ENCODE measurements at regions of chrX and their contacts with region 1.

Region 1: GRCh38 chrX:120485315-120485637 is 16.2 kb upstream of the LAMP2 start:
- DNase-seq: no peak
- ATAC-seq: no peak
- H3K4me3 ChIP-seq: peak overlapping the region; percentile 46 to 60
- H3K27ac ChIP-seq: peak overlapping the region; percentile 91
- H3K4me1 ChIP-seq: peaks cover 5% of the 10 kb centered on the region; the same call in 1 of the 2 replicates
- H3K27me3 ChIP-seq: no peaks in the 10 kb centered on the region
- CTCF ChIP-seq: no peak

Region 2: DNA sequence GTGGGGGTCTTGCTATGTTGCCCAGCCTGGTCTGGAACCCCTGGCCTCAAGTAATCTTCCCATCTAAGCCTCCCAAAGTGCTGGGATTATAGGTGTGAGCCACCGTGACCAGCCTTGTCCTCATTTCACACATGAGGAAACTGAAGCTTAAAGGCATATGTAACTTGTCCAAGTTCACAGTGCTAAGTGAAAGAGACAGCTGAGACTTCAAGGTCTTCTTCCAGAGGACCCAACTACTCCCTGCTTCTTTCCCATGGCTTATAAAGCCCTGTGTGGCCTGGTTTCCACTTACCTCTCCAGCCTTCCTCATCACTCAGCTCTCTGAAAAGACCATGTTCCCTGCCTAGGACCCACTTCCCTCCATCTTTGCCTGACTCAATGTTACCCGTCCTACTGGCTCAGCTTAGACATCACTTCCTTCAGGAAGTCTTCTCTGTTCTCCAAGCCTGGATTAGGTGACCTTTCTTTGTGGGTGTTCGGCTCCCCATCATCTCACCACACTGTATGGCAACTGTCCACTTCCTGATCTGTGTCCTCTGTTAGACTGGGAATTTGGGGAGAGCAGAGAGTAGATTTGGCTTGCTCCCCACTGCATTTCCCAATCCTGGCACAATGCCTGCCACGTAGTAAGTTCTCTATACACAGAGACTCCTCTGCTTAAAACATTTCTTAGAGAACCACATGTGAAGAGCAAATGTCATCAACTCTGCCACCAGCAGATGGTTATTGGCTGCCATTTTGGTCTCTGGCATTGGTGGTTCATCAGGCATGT is 14.2 kb after region 1 on chrX:
- CTCF ChIA-PET with region 1: no interaction called
- POLR2A ChIA-PET with region 1: no interaction called
- in situ Hi-C with region 1: no loop called
- intact Hi-C with region 1: no loop called
- DNase-seq: no peak
- ATAC-seq: no peak
- H3K4me3 ChIP-seq: no peak overlapping the region
- H3K27ac ChIP-seq: no peak overlapping the region
- H3K4me1 ChIP-seq: no peaks in the 10 kb centered on the region
- H3K27me3 ChIP-seq: no peaks in the 10 kb centered on the region
- CTCF ChIP-seq: no peak

Region 3: DNA sequence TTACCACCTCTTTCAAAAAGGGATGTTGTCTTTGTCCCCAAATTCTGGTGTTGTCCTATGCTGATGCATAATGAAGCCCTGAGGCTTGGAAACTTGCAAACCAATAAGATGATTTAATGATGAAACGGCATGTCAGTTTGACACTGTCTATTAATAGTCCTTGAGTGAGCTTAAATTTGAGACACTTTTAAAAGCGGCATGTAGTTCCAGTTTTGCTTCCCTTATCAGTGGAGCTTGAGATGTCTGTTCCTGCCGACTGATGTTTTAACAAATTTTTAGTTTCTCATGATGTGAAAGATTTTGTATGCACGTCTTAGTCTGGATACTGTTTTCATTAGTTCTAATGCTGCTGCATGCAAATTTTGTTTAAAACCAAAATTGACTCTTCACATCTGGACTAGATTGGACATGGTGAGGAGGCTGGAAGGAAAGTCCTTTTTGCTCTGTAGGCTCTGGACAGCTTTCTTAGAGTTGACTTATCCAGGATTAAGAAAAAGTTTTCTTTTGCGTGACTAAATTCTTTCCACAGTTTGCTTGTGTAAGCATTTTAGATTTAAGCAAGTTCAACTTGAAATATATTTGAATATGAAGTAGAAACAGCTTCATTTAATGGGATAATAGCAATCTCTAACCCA is 132.8 kb after region 1 on chrX:
- CTCF ChIA-PET with region 1: interaction called, 19 read pairs
- POLR2A ChIA-PET with region 1: no interaction called
- in situ Hi-C with region 1: no loop called
- intact Hi-C with region 1: no loop called
- DNase-seq: no peak
- ATAC-seq: no peak
- H3K4me3 ChIP-seq: no peak overlapping the region
- H3K27ac ChIP-seq: no peak overlapping the region
- H3K4me1 ChIP-seq: no peaks in the 10 kb centered on the region
- H3K27me3 ChIP-seq: no peaks in the 10 kb centered on the region
- CTCF ChIP-seq: no peak

Measured in Panc1 (cell line).